ENCODE measurements at regions of chr9 and their contacts with region 1.

Region 1: GRCh38 chr9:71552480-71552879 is 215.8 kb downstream of the CEMIP2 start:
- DNase-seq: no peak
- H3K4me3 ChIP-seq: no peak overlapping the region
- CTCF ChIP-seq: no peak
- POLR2A ChIP-seq: no peak

Region 2: GRCh38 chr9:71487061-71487460 is 65.4 kb before region 1 on chr9:
- intact Hi-C with region 1: loop called (anchors 10 kb)
- DNase-seq: peak; percentile 30 to 87
- H3K4me3 ChIP-seq: no peak overlapping the region
- CTCF ChIP-seq: no peak
- POLR2A ChIP-seq: no peak